ENCODE measurements at regions of chr1 and their contacts with region 1.

Region 1: GRCh38 chr1:155127105-155127964 is at the start of gene EFNA1:
- DNase-seq: peak; percentile 82
- ATAC-seq: peak; percentile 66
- total RNA-seq, gene EFNA1: 43.9 TPM

Region 2: DNA sequence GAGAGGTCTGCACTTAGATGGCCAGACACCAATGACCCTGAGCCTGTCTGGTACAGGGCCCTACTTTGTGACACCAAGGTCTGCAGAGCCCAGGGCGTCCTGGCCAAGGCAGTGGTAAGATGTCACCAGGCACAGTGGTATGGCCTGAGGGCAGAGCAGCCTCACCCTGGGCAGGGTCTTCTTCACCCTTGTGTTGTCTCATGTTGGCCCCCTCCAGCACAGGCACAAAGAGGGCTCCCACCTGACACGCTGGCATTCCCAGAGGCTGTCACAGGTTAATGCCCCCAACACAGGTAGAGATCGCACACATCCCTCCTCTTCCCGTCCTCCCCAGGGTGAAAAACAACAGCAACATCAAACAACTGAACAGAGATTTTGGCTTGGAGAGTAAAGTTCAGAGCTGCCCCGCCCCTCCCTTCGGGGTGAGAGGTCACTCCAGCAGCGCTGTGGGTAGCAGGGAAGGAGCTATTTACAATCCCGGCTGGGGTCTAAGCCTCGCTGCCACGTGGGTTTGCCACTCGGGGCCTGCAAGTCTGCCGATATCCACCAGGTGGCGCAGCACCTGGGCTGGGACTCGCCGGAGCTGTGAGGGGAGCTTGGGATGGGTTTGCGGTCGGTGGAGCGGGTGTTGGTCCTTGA is 36.1 kb before region 1 on chr1:
- intact Hi-C with region 1: loop called (anchors 2 kb)
- DNase-seq: peak; percentile 91
- ATAC-seq: peak; percentile 56